Activated CD4-positive, alpha-beta T cell treated with anti-CD3 and anti-CD28 coated beads for 36 hours (primary cell): ENCODE measurements at regions of chr15 and their contacts with region 1.

Region 1: GRCh38 chr15:94004697-94005096 is 226.7 kb upstream of the MCTP2 start:
- DNase-seq: no peak
- ATAC-seq: no peak
- H3K4me3 Mint-ChIP-seq: no peak overlapping the region
- H3K27ac Mint-ChIP-seq: no peak overlapping the region
- H3K4me1 Mint-ChIP-seq: no peaks in the 10 kb centered on the region
- H3K27me3 Mint-ChIP-seq: no peaks in the 10 kb centered on the region

Region 2: DNA sequence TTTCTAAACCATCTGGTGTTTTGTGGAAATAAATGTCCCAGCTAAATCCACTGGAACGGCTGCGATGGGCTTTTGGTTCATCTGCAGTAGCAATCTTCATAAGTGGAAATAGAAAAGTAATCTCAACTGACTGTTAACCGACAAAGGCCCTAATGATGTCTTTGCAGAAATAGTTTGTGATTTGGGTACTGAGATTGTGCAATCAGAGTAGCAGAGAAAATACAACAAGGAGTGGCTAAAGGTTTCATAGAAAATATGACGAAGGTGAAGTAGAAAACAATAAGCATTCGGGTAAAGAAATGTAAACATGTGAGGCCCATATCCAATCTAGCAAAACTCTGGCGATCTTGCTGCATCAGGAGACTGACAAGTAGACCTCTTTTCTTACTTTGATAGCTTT is 35.9 kb before region 1 on chr15:
- CTCF ChIA-PET with region 1: no interaction called
- POLR2A ChIA-PET with region 1: no interaction called
- intact Hi-C with region 1: no loop called
- DNase-seq: no peak
- ATAC-seq: no peak
- H3K4me3 Mint-ChIP-seq: no peak overlapping the region
- H3K27ac Mint-ChIP-seq: no peak overlapping the region
- H3K4me1 Mint-ChIP-seq: no peaks in the 10 kb centered on the region
- H3K27me3 Mint-ChIP-seq: peaks cover 2% of the 10 kb centered on the region

Region 3: DNA sequence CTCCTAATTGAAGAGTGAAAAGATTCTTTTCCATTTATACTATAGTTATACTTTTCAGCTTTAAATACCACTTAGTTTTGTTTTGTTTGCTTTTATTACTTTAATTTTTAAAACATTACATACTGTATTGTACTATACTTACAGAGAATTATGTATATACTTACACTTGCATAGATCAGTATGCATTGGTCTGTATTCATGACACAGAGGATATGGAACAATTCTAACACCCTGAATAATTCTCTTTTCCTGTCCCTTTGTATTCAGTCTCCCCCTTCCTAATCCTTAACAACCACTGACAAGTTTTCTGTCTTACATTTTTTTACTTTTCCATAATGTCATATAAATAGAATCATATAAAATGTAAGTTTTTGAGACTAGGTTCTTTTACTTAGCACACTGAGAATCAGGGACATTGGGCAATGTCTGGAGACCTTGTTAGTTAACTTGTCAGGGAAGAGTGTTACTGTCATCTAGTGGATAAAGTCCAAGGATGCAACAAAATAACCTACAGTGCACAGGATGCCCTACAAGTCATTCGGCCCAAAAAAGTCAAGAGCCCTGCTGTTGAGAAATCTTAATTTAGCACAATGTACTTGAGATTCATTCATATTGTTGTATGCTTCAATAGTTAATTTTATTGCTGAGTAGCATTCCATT is 130.9 kb after region 1 on chr15:
- CTCF ChIA-PET with region 1: no interaction called
- POLR2A ChIA-PET with region 1: no interaction called
- intact Hi-C with region 1: loop called in 1 of 2 experiments (anchors 5 kb)
- DNase-seq: no peak
- ATAC-seq: no peak
- H3K4me3 Mint-ChIP-seq: no peak overlapping the region
- H3K27ac Mint-ChIP-seq: no peak overlapping the region
- H3K4me1 Mint-ChIP-seq: no peaks in the 10 kb centered on the region
- H3K27me3 Mint-ChIP-seq: peaks cover 21% of the 10 kb centered on the region